ENCODE measurements at regions of chr1 and their contacts with region 1.

Region 1: GRCh38 chr1:116570358-116571200 is at the start of gene CD58:
- DNase-seq: peak; percentile 97
- total RNA-seq, gene CD58: 25.3 TPM

Region 2: GRCh38 chr1:115991909-115992308 is 578.7 kb before region 1 on chr1:
- intact Hi-C with region 1: no loop called
- DNase-seq: no peak

Region 3: GRCh38 chr1:116377541-116378529 is 192.7 kb before region 1 on chr1:
- intact Hi-C with region 1: loop called (anchors 5 kb)
- DNase-seq: no peak

Region 4: GRCh38 chr1:116485071-116485735 is 85.4 kb before region 1 on chr1:
- intact Hi-C with region 1: no loop called
- DNase-seq: peak; percentile 90

Region 5: DNA sequence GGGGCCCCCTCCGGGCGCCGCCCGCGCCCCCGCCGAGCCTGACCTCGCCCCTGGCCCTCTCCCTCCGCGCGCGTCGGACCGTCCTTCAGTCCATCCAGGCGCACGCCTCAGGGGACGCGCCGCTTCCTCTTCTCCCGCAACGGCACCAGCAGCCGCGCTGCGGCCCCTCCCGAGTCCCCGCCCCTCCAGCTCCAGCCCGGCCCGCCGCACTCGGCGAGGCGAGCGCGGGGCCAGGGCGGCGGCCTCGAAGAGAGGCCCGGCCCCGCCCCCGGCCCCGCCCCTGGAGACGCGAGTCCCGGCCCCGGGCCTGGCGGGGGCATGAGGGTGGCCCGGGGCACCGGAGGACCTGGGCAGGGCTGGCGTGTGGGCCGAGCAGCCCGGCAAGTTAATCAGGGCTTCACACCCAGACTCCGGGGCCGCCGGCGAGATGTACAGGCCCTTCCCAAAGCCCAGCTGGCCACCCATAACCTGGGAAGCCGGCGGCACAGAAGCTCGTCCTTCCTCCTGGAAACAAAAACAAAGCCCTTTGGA is 97.1 kb after region 1 on chr1 and contains the start of gene IGSF3:
- intact Hi-C with region 1: loop called (anchors 5 kb)
- DNase-seq: peak; percentile 85
- total RNA-seq, gene IGSF3: 5.2 TPM

Region 6: DNA sequence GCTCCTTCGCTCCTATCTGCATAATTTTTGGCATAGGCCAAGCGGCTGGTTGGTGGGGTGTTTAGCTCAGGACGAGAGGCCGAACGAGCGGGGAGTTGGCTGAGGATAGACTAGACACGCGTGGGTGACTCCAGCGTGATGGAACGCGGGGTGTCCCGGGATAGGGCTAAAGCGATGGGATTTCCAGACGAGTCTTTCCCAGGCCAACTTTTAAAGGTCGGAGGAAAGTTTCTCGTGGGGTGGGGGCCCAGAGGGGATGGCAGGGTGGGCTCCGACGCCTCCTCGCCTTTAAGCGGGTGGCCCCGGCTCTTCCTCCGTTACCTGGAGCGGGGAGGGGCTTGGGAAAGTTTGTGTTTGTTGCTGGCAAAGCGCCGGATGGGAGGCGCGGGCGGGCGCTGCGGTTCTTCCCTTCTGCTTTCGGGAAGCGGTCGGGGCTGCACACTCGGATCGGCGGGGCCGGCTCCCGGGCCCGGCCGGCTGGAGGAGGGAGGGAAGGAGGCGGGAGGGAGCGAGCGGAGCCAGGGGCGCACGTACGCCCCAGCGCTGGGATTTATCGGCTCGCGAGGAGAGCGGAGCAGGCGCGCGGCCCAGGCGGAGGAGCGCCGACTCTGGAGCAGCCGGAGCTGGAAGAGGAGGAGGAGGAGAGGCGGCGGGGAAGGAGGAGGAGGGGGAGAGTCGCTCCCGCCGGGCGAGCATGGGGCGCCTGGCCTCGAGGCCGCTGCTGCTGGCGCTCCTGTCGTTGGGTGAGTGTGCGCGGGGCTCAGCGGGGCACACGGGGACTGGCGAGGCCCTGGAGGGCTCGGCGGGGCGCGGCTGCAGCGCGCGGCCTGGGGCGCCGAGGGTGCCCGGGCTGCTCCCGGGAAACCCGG is 339.2 kb after region 1 on chr1 and contains the start of gene PTGFRN:
- intact Hi-C with region 1: loop called (anchors 10 kb)
- DNase-seq: peak; percentile 77
- total RNA-seq, gene PTGFRN: 216 TPM

Region 7: GRCh38 chr1:117059678-117060440 is 489.3 kb after region 1 on chr1 and contains the start of gene TTF2:
- intact Hi-C with region 1: loop called (anchors 5 kb)
- DNase-seq: peak; percentile 96
- total RNA-seq, gene TTF2: 9.4 TPM

Measured in cardiac septum (tissue), 1 donor.